Endothelial cell of umbilical vein (primary cell): ENCODE measurements at regions of chr10 and their contacts with region 1.

Region 1: GRCh38 chr10:73810735-73811465 is 498 bp downstream of the NDST2 start:
- DNase-seq: peak; percentile 28
- H3K4me3 ChIP-seq: peak overlapping the region; percentile 67 to 84 (median 73)
- H3K27ac ChIP-seq: peak overlapping the region; percentile 80
- H3K4me1 ChIP-seq: peaks cover 12% of the 10 kb centered on the region
- H3K27me3 ChIP-seq: no peaks in the 10 kb centered on the region
- CTCF ChIP-seq: no peak
- POLR2A ChIP-seq: no peak

Region 2: GRCh38 chr10:73785221-73785720 is 25.6 kb before region 1 on chr10 and contains the start of gene ZSWIM8:
- CTCF ChIA-PET with region 1: interaction called, 3 read pairs
- POLR2A ChIA-PET with region 1: interaction called, 6 read pairs
- dilution Hi-C with region 1: no loop called
- intact Hi-C with region 1: loop called (anchors 1 kb)
- DNase-seq: peak; percentile 95
- H3K4me3 ChIP-seq: peak within 1 kb of the TSS; percentile 51 to 73 (median 68)
- H3K27ac ChIP-seq: peak within 1 kb of the TSS; percentile 46
- H3K4me1 ChIP-seq: peaks cover 33% of the 10 kb centered on the region
- H3K27me3 ChIP-seq: no peaks in the 10 kb centered on the region
- CTCF ChIP-seq: peak in 1 of 2 donors; percentile 25
- POLR2A ChIP-seq: peak; percentile 65
- total RNA-seq, gene ZSWIM8: 111 and 112 TPM in 2 replicates

Region 3: GRCh38 chr10:73931767-73932619 is 121.1 kb after region 1 on chr10:
- CTCF ChIA-PET with region 1: no interaction called
- POLR2A ChIA-PET with region 1: no interaction called
- dilution Hi-C with region 1: no loop called
- intact Hi-C with region 1: no loop called
- DNase-seq: no peak
- H3K4me3 ChIP-seq: no peak overlapping the region
- H3K27ac ChIP-seq: no peak overlapping the region
- H3K4me1 ChIP-seq: peaks cover 5% of the 10 kb centered on the region
- H3K27me3 ChIP-seq: no peaks in the 10 kb centered on the region
- CTCF ChIP-seq: no peak
- POLR2A ChIP-seq: no peak